ENCODE measurements at regions of chr6 and their contacts with region 1.

Region 1: GRCh38 chr6:155530219-155530834 is 74.7 kb upstream of the NOX3 start:
- DNase-seq: peak; percentile 73
- ATAC-seq: peak; percentile 90
- H3K4me3 ChIP-seq: no peak overlapping the region
- H3K27ac ChIP-seq: peak overlapping the region; percentile 71
- H3K4me1 ChIP-seq: peaks cover 33% of the 10 kb centered on the region
- H3K27me3 ChIP-seq: no peaks in the 10 kb centered on the region
- CTCF ChIP-seq: peak; percentile 86
- EP300 ChIP-seq: no peak
- POLR2A ChIP-seq: no peak
- RAD21 ChIP-seq: peak; percentile 81

Region 2: DNA sequence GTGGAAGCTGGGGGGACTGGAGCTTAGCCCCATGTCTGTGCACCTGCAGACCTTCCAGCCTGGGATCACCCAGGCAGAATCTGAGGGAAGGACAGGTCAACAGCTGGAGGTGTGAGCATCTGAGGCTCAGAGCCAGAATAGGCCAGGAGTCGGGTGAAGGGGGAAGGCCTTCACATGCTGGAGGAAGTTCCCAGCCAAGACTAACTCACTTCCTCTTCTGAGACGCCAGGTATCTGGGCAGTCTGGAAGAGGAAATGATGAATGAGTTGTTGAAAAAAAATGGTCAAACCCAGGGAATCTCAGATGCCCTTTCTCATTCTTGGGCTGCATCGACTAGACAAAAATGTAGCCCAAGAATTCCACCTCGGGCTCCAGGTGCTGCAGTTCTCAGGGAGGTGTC is 608.8 kb before region 1 on chr6:
- CTCF ChIA-PET with region 1: no interaction called
- POLR2A ChIA-PET with region 1: no interaction called
- in situ Hi-C with region 1: loop called (anchors 25 kb)
- intact Hi-C with region 1: no loop called
- DNase-seq: no peak
- ATAC-seq: no peak
- H3K4me3 ChIP-seq: no peak overlapping the region
- H3K27ac ChIP-seq: no peak overlapping the region
- H3K4me1 ChIP-seq: peaks cover 9% of the 10 kb centered on the region
- H3K27me3 ChIP-seq: no peaks in the 10 kb centered on the region
- CTCF ChIP-seq: no peak
- EP300 ChIP-seq: no peak
- POLR2A ChIP-seq: no peak
- RAD21 ChIP-seq: no peak

Region 3: GRCh38 chr6:155174576-155175211 is 355.6 kb before region 1 on chr6:
- CTCF ChIA-PET with region 1: interaction called, 3 read pairs
- POLR2A ChIA-PET with region 1: no interaction called
- in situ Hi-C with region 1: loop called (anchors 10 kb)
- intact Hi-C with region 1: loop called (anchors 2 kb)
- DNase-seq: peak; percentile 82
- ATAC-seq: peak; percentile 96
- H3K4me3 ChIP-seq: no peak overlapping the region
- H3K27ac ChIP-seq: no peak overlapping the region
- H3K4me1 ChIP-seq: peaks cover 7% of the 10 kb centered on the region; the same call in 1 of the 2 replicates
- H3K27me3 ChIP-seq: no peaks in the 10 kb centered on the region
- CTCF ChIP-seq: peak; percentile 90
- EP300 ChIP-seq: no peak
- POLR2A ChIP-seq: no peak
- RAD21 ChIP-seq: peak; percentile 72

Region 4: DNA sequence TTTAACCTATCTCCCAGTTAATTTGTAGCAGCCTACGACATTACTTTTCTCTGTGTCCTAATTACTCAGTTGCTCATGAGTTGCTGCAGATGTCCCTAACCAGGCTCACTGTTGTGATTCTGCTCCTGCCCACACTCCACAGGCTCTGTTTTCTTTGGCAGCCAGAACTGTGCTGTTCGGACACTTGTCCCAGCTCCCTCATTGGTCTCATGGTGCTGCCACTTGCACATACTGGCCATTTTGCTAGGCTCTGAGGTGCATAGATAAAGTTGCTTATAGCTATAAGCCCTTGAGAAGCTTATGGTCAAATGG is 129.7 kb before region 1 on chr6:
- CTCF ChIA-PET with region 1: no interaction called
- POLR2A ChIA-PET with region 1: interaction called, 12 read pairs
- in situ Hi-C with region 1: no loop called
- intact Hi-C with region 1: loop called (anchors 1 kb)
- DNase-seq: no peak
- ATAC-seq: no peak
- H3K4me3 ChIP-seq: no peak overlapping the region
- H3K27ac ChIP-seq: peak overlapping the region; percentile 96
- H3K4me1 ChIP-seq: peaks cover 81% of the 10 kb centered on the region
- H3K27me3 ChIP-seq: no peaks in the 10 kb centered on the region
- CTCF ChIP-seq: no peak
- EP300 ChIP-seq: no peak
- POLR2A ChIP-seq: no peak
- RAD21 ChIP-seq: no peak

Region 5: GRCh38 chr6:155444120-155444917 is 86.0 kb before region 1 on chr6:
- CTCF ChIA-PET with region 1: no interaction called
- POLR2A ChIA-PET with region 1: no interaction called
- in situ Hi-C with region 1: no loop called
- intact Hi-C with region 1: loop called (anchors 1 kb)
- DNase-seq: peak; percentile 100
- ATAC-seq: peak; percentile 100
- H3K4me3 ChIP-seq: peak overlapping the region in 1 of 3 experiments; percentile 28; a peak in 1 of 6 replicates
- H3K27ac ChIP-seq: peak overlapping the region; percentile 96
- H3K4me1 ChIP-seq: peaks cover 78% of the 10 kb centered on the region
- H3K27me3 ChIP-seq: no peaks in the 10 kb centered on the region
- CTCF ChIP-seq: no peak
- EP300 ChIP-seq: peak; percentile 99
- POLR2A ChIP-seq: peak in 1 of 2 experiments; percentile 59; a peak in 2 of 4 replicates
- RAD21 ChIP-seq: peak; percentile 37

Region 6: GRCh38 chr6:155487371-155488130 is 42.8 kb before region 1 on chr6:
- CTCF ChIA-PET with region 1: no interaction called
- POLR2A ChIA-PET with region 1: interaction called, 15 read pairs
- in situ Hi-C with region 1: no loop called
- intact Hi-C with region 1: loop called (anchors 2 kb)
- DNase-seq: peak; percentile 52
- ATAC-seq: no peak
- H3K4me3 ChIP-seq: no peak overlapping the region; a peak in 1 of 6 replicates
- H3K27ac ChIP-seq: peak overlapping the region; percentile 84
- H3K4me1 ChIP-seq: peaks cover 96% of the 10 kb centered on the region
- H3K27me3 ChIP-seq: no peaks in the 10 kb centered on the region
- CTCF ChIP-seq: no peak
- EP300 ChIP-seq: peak in 1 of 2 experiments; percentile 56; a peak in 2 of 4 replicates
- POLR2A ChIP-seq: peak in 1 of 2 experiments; percentile 25; a peak in 1 of 4 replicates
- RAD21 ChIP-seq: no peak

Region 7: DNA sequence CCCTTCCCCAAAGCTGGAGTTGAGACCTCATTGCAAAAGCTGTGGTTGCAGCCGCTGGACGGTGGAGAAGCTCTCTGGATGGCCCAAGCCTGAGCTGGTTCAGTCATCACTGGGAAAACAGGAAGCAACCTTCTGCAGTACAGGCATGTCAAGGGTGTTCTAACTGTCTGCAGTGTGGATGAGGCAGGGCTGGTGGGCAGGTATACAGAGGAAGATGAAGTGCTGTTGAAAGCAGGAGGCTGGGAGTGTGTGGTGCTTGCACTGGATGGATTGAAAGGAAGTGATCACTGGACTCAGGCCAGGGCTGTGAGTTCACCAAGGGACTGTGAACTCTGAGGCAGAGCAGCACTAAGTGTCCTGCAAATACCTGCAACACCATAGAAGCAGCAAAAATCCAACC is 14.3 kb after region 1 on chr6:
- CTCF ChIA-PET with region 1: no interaction called
- POLR2A ChIA-PET with region 1: no interaction called
- in situ Hi-C with region 1: no loop called
- intact Hi-C with region 1: loop called (anchors 2 kb)
- DNase-seq: peak; percentile 23
- ATAC-seq: peak; percentile 99
- H3K4me3 ChIP-seq: no peak overlapping the region
- H3K27ac ChIP-seq: no peak overlapping the region
- H3K4me1 ChIP-seq: peaks cover 11% of the 10 kb centered on the region
- H3K27me3 ChIP-seq: no peaks in the 10 kb centered on the region; a peak in 1 of 5 replicates
- CTCF ChIP-seq: no peak
- EP300 ChIP-seq: no peak
- POLR2A ChIP-seq: no peak
- RAD21 ChIP-seq: no peak

Measured in HepG2 (cell line).